ENCODE measurements at regions of chr14 and their contacts with region 1.

Region 1: DNA sequence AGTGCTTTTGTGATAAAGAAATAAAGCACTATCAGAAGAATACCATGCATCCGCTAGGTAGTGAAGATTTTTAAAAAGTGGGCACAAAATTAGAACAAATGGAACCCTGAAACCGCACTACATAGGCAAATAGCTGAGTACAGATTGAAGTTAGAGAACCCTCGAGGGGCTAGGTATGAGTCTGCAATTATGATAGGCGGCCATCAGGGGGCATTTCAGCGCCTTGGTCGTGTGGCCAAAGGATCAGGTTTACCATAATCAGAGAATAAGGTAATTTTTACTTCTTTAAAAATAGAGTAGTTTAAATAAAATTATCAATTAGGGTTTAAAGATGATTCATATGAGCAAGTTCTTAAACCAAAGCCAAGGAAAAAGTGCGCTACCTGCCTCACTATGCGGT is 129.8 kb downstream of the TMX1 start:
- DNase-seq: no peak
- ATAC-seq: no peak
- H3K4me3 ChIP-seq: no peak overlapping the region
- H3K27ac ChIP-seq: no peak overlapping the region
- H3K4me1 ChIP-seq: peaks cover 9% of the 10 kb centered on the region
- H3K27me3 ChIP-seq: no peaks in the 10 kb centered on the region
- CTCF ChIP-seq: no peak
- POLR2A ChIP-seq: no peak
- RAD21 ChIP-seq: peak; percentile 16; the same call in 1 of the 2 replicates

Region 2: DNA sequence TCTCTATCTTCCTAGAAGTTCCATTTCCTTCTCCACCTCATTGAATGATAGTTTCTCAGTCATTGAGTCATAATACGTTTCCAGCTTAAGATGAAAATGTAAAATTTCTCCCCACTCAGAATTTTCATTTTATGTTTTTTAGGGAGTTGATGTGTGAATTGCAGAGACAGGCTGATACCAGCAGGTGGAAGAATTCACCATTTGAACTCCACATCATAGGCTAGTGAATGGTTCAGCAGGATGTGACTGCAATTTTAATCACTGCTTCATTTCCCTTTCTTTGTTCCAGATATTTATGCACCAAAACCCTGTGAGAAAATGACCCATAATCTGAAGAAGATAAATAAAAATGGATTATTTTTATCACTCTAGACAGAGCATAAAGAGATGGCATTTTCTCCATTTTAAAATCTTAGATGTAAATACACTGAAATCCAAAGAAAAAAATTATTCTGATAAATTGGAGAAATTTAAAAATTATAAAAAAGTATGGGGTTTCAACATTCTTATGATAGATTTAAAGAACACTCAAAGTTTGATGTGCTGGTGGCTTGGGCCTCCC is 414.9 kb before region 1 on chr14:
- CTCF ChIA-PET with region 1: no interaction called
- POLR2A ChIA-PET with region 1: no interaction called
- dilution Hi-C with region 1: no loop called
- in situ Hi-C with region 1: no loop called
- intact Hi-C with region 1: no loop called
- DNase-seq: peak; percentile 79
- ATAC-seq: peak; percentile 63
- H3K4me3 ChIP-seq: no peak overlapping the region
- H3K27ac ChIP-seq: peak overlapping the region; percentile 81
- H3K4me1 ChIP-seq: peaks cover 4% of the 10 kb centered on the region
- H3K27me3 ChIP-seq: no peaks in the 10 kb centered on the region
- CTCF ChIP-seq: peak; percentile 78
- POLR2A ChIP-seq: no peak
- RAD21 ChIP-seq: peak; percentile 65

Region 3: DNA sequence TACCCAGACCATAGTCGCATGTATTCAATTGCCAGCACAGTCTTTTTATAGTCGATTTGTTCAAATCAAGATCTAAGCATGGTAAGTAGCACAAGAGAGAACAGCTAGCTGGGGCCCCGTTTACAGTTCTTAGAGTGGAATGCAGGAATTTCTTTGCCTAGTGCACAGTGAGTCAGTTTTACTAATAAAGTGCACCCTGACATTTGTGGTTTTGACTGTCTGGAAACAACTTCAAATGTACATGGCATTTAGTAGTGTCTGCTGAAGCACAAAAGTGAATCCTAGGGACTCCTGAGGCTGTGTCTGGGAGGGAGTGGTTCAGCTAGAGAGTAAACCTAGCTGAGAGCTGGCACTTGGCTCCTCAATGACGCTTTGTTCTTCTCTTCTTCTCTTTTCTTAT is 64.9 kb before region 1 on chr14:
- CTCF ChIA-PET with region 1: no interaction called
- POLR2A ChIA-PET with region 1: no interaction called
- dilution Hi-C with region 1: no loop called
- in situ Hi-C with region 1: no loop called
- intact Hi-C with region 1: loop called (anchors 5 kb)
- DNase-seq: peak; percentile 96
- ATAC-seq: peak; percentile 97
- H3K4me3 ChIP-seq: no peak overlapping the region
- H3K27ac ChIP-seq: peak overlapping the region; percentile 33; the same call in 1 of the 2 replicates
- H3K4me1 ChIP-seq: peaks cover 5% of the 10 kb centered on the region
- H3K27me3 ChIP-seq: no peaks in the 10 kb centered on the region
- CTCF ChIP-seq: no peak
- POLR2A ChIP-seq: no peak; the same call in 1 of the 2 replicates
- RAD21 ChIP-seq: peak; percentile 37

Region 4: DNA sequence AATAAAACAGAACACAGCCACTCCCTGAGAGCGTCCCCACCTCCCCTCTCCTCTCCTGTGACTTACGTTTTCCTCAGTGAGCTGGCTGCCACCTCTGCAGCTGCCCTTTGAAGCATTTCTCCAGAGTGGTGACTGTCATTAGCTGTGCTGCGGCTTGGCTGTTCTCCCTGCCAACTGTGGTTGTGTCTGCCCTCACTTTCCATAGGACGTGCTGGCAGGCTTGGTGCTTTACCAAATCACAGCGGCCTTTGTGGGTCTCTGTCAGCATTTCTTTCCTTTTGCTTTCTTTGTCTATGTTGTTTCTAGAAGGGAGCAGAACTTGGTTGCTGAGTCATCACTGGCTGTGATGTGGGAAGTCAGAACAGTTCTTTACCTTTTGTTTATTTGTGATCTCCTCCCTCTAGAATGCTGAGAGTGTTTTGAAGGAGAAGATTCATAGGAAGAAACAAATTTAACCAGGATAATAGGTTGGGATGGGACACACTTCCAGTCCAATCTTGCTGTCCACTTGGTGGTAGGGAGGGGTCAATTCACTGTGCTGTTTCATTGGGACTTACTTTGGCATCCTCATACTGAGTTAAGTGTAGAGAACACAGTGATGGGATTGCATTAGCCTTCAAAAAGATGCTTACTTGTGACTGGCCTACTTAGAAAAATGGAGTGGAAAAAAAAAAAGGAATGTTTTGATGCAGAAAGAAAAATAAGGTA is 41.6 kb before region 1 on chr14:
- CTCF ChIA-PET with region 1: no interaction called
- POLR2A ChIA-PET with region 1: no interaction called
- dilution Hi-C with region 1: no loop called
- in situ Hi-C with region 1: no loop called
- intact Hi-C with region 1: loop called (anchors 5 kb)
- DNase-seq: peak; percentile 82
- ATAC-seq: peak; percentile 81
- H3K4me3 ChIP-seq: peak overlapping the region; percentile 15; the same call in 1 of the 2 replicates
- H3K27ac ChIP-seq: peak overlapping the region; percentile 51
- H3K4me1 ChIP-seq: peaks cover 16% of the 10 kb centered on the region
- H3K27me3 ChIP-seq: no peaks in the 10 kb centered on the region
- CTCF ChIP-seq: no peak
- POLR2A ChIP-seq: no peak
- RAD21 ChIP-seq: no peak

Region 5: DNA sequence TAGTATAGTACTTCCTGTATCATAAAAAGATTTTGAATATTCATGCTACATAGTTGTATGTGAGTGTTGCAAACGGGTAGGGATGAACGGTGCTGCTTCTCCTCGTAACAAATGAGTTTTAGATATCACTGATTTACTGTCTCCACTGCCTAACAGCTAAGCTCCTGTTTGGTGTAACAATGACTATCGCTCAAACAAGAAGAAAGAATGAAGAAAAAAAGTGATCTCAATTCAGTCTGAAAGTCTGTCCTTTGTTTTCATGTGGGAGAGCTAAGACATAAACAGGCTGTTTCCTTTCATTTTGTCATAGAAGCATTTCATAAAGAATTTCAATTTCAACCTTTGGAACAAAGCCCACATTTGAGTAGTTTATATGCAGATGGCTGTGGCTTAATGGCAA is 593.5 kb after region 1 on chr14:
- CTCF ChIA-PET with region 1: no interaction called
- POLR2A ChIA-PET with region 1: no interaction called
- dilution Hi-C with region 1: no loop called
- in situ Hi-C with region 1: no loop called
- intact Hi-C with region 1: no loop called
- DNase-seq: peak; percentile 53
- ATAC-seq: peak; percentile 71
- H3K4me3 ChIP-seq: peak overlapping the region; percentile 44; the same call in 1 of the 2 replicates
- H3K27ac ChIP-seq: peak overlapping the region; percentile 47; the same call in 1 of the 2 replicates
- H3K4me1 ChIP-seq: peaks cover 5% of the 10 kb centered on the region; the same call in 1 of the 2 replicates
- H3K27me3 ChIP-seq: no peaks in the 10 kb centered on the region
- CTCF ChIP-seq: no peak
- POLR2A ChIP-seq: no peak
- RAD21 ChIP-seq: no peak

Measured in IMR-90 (cell line).